ENCODE measurements at regions of chr22 and their contacts with region 1.

Region 1: DNA sequence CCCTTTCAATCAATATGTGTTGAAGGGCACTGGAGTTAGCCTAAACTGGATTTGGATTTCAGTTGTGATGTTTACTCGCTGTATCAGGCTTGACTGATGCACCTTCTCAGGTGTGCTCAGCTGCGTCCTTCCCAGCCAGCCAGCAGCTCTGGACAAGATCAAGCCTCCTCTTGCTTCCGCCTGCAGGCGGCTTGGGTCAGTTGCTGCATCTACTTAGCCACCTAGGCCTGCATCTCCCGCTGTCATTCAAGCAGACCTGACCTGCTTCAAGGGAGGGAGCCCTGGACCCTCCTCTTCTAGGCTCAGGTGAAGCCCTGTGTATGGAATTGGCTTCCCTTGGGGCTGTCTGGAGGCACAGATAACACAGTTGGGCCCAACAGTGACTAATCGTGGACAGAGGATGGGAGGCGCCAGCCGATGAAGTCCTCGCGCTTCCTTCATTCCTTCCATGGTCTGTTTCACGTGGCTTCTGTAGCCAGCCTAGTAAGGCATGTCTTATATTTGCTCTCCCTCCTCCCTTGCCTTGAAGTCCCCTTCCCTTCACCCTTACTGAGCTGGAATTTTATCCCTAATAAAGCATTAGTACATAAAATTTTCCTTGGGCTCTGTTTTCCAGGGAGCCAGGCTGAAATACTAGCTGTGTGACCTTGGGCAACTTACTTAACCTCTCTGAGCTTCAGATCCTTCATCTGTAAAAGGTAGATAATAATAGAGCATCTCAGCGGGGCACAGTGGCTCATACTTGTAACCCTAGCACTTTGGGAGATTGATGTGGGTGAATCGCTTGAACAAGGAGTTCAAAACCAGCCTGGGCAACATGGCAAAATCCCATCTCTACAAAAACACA is 2.1 kb upstream of the LHFPL7 start:
- DNase-seq: no peak
- CTCF ChIP-seq: no peak

Region 2: GRCh38 chr22:25057013-25057881 is 108.7 kb after region 1 on chr22:
- in situ Hi-C with region 1: loop called (anchors 10 kb)
- DNase-seq: peak; percentile 70
- CTCF ChIP-seq: peak; percentile 85

Region 3: GRCh38 chr22:25350551-25350971 is 402.0 kb after region 1 on chr22:
- in situ Hi-C with region 1: no loop called
- DNase-seq: no peak
- CTCF ChIP-seq: no peak

Region 4: DNA sequence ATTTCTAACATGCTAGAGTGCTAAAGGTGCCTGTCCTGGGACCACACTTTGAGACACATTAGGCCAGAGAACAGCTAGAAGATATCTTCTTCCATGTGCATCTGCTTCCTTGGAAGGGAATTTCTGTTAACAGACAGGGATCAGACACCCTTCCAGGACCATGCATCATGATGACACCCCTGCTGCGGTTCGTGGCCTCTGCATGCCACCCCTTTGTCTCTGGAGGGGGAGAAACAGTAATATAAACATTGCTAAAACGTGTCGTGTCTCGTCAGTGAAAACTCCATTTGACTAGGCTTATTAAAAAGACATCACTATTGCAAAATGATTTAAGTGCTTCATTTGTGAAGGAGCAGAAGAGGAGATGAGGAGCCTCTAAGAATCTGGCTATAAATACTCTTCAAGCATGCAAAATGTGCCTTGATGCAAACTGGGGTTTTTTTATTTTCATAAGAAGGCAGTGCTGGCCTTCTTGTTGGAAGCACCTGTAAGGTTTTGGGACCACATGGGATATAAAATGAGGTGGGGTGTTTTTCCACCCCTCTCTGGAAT is 935.0 kb after region 1 on chr22:
- in situ Hi-C with region 1: no loop called
- DNase-seq: no peak
- CTCF ChIP-seq: no peak